ENCODE measurements at regions of chr10 and their contacts with region 1.

Region 1: GRCh38 chr10:14683256-14683655 is 91.4 kb downstream of the FAM107B start:
- DNase-seq: no peak

Region 2: DNA sequence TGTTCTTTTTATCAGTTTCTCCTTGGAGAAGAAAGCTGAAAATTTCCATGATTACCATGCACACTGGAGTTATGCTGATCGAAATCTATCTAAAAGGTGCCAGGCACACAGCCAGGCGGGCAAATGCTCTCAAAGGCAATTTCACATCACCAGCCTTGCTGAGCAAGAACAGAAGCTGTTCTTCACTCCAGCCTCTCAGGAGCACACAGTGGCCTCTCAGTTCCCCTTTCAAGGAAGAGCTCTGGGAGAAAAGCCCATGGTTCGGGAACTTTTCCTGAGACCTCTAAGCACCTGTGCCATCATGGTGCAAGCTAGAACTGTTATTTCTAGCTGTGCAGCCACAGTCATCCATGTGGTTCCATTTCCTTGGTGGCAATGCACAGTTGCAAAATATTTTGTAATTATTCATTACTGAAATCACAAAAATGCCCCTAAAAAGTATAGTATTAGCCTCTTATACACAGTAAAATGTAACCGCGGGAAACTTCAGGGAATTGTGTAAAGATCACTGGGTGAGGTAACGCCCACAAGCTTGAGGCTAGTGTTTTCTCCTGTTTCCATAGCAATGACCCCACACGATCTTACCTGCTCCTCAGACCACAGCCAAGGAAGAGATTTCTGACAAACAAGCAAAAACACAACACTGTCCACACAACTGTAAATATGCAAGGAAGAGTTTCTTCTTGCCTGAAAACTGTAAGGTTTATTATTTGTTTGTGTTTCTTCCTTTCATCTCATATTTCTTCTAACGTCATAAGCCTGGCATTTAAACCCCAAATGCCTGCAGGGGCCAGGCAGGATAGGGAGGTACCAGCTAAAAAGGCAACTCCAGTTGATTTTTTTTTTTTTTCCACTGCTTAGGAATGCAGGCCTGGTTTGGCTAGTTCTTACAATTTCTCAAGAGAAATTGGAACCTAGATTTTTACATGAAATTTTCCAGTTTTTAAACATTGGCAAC is 29.7 kb before region 1 on chr10:
- intact Hi-C with region 1: loop called in 1 of 2 experiments (anchors 1 kb)
- DNase-seq: no peak

Region 3: DNA sequence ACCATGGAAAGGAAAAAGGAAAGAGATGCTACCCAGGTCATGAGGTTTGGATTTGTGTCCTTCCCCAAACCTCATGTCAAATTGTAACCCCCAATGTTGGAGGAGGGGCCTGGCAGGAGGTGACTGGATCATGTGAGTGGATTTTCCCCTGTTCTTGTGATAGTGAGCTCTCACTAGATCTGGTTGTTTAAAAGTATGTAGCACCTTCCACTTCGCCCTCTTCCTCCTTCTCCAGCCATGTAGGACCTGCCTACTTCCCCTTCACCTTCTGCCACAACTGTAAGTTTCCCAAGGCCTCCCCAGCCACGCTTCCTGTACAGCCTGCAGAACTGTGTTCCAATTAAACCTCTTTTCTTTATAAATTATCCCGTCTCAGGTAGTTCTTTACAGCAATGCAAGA is 22.4 kb before region 1 on chr10:
- intact Hi-C with region 1: loop called in 1 of 2 experiments (anchors 1 kb)
- DNase-seq: no peak

Region 4: DNA sequence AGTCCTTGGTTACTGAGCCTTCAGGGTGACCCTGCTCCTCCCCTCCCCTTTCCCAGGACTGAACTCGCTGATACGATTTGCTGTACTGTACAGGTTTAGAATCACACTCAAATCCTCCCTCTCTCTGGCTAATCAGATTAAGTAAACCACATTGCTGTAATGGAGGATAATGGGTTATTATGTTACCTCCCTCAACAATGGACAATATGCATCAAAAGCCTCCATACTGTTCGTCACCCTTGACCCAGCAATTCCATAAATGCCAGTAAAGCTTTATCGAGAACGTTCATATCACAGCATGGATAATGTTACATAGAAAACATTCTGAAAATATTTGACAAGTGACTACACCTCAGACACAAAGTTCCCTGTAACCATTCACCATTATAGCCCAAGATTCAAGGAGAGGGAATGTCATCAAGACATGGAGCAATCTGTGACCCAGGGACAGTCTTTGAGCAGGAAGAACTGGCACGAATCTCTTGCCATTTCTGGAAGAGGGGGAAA is 29.8 kb after region 1 on chr10:
- intact Hi-C with region 1: no loop called
- DNase-seq: no peak